Heart left ventricle (tissue), 16 donors: ENCODE measurements at regions of chr14 and their contacts with region 1.

Region 1: GRCh38 chr14:69611201-69612011 is at the start of gene SUSD6:
- DNase-seq: peak; percentile 93 to 95 (median 94)
- ATAC-seq: peak; percentile 80 to 92 (median 90)
- H3K4me3 ChIP-seq: peak within 1 kb of the TSS; percentile 76 to 96 (median 86)
- H3K27ac ChIP-seq: peak within 1 kb of the TSS; percentile 94 to 100 (median 98)
- H3K4me1 ChIP-seq: peaks cover 5 to 60% (median 51%) of the 10 kb centered on the region in 12 donors
- H3K27me3 ChIP-seq: no peaks in the 10 kb centered on the region
- CTCF ChIP-seq: no peak
- POLR2A ChIP-seq: peak in 1 of 2 donors; percentile 70
- total RNA-seq, gene SUSD6: 17.8 to 49.2 (median 24.8) TPM

Region 2: GRCh38 chr14:69637503-69638030 is 26.2 kb after region 1 on chr14:
- intact Hi-C with region 1: loop called in 1 of 10 experiments (anchors 2 kb)
- DNase-seq: peak in 4 of 5 donors; percentile 45 to 64 (median 54)
- ATAC-seq: peak; percentile 37 to 75 (median 55)
- H3K4me3 ChIP-seq: no peak overlapping the region
- H3K27ac ChIP-seq: peak overlapping the region in 11 of 12 donors; percentile 30 to 84 (median 80)
- H3K4me1 ChIP-seq: peaks cover 7 to 85% (median 70%) of the 10 kb centered on the region in 12 donors
- H3K27me3 ChIP-seq: no peaks in the 10 kb centered on the region
- CTCF ChIP-seq: no peak
- POLR2A ChIP-seq: no peak

Region 3: GRCh38 chr14:69652942-69653684 is 41.7 kb after region 1 on chr14:
- intact Hi-C with region 1: loop called in 4 of 10 experiments (anchors 5 kb)
- DNase-seq: peak in 1 of 5 donors; percentile 17
- ATAC-seq: peak; percentile 16 to 66 (median 42)
- H3K4me3 ChIP-seq: peak overlapping the region in 1 of 12 donors; percentile 18
- H3K27ac ChIP-seq: peak overlapping the region in 11 of 12 donors; percentile 50 to 92 (median 77)
- H3K4me1 ChIP-seq: peaks cover 13 to 97% (median 89%) of the 10 kb centered on the region in 12 donors
- H3K27me3 ChIP-seq: no peaks in the 10 kb centered on the region
- CTCF ChIP-seq: no peak
- POLR2A ChIP-seq: no peak

Region 4: GRCh38 chr14:69667938-69668335 is 56.5 kb after region 1 on chr14:
- intact Hi-C with region 1: loop called in 7 of 10 experiments (anchors 5 to 10 kb)
- DNase-seq: no peak
- ATAC-seq: no peak
- H3K4me3 ChIP-seq: no peak overlapping the region
- H3K27ac ChIP-seq: peak overlapping the region in 3 of 12 donors; percentile 11 to 66 (median 55)
- H3K4me1 ChIP-seq: peaks cover 48 to 100% (median 83%) of the 10 kb centered on the region in 12 donors
- H3K27me3 ChIP-seq: no peaks in the 10 kb centered on the region
- CTCF ChIP-seq: no peak
- POLR2A ChIP-seq: no peak

Region 5: GRCh38 chr14:69673578-69674305 is 62.3 kb after region 1 on chr14:
- intact Hi-C with region 1: loop called in 7 of 10 experiments (anchors 5 to 10 kb)
- DNase-seq: peak in 1 of 5 donors; percentile 31
- ATAC-seq: peak in 2 of 4 donors; percentile 21 to 32
- H3K4me3 ChIP-seq: peak overlapping the region in 5 of 12 donors; percentile 1 to 34 (median 19)
- H3K27ac ChIP-seq: peak overlapping the region; percentile 1 to 79 (median 56)
- H3K4me1 ChIP-seq: peaks cover 33 to 85% (median 72%) of the 10 kb centered on the region in 12 donors
- H3K27me3 ChIP-seq: no peaks in the 10 kb centered on the region
- CTCF ChIP-seq: no peak
- POLR2A ChIP-seq: no peak

Region 6: DNA sequence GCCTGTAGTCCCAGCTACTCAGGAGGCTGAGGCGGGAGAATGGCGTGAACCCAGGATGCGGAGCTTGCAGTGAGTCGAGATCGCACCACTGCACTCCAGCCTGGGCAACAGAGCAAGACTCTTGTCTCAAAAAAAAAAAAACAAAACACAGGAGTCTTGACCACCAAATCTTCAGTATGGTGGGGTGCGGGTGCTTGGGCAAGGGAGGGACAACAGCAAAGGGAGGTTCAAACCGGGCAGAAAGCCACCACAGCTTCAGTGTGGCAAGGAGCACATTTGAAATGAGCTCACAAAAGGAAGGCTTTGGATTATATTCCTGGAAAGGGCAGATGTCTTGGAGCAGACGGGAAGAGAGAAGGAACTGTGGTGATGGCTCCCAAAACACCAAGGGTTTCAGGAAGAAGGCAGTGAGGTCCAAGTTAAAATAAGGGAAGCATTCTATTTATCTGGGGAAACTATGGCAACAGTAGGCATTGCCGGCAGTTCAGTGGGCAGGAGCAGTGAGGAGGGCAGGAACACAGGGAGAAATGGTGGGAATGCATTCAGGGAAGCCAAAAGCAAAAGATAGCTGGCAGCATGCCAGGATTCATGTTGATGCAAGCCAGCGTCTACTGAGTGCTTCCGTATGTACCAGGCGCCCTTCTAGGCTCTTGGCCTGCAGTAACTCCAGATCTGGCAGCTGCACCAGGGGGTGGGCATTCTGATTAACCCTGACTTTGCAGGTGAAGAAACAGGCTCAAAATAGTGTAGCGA is 104.5 kb after region 1 on chr14:
- intact Hi-C with region 1: loop called in 6 of 10 experiments (anchors 2 to 5 kb)
- DNase-seq: peak in 4 of 5 donors; percentile 77 to 86 (median 80)
- ATAC-seq: peak; percentile 33 to 70 (median 61)
- H3K4me3 ChIP-seq: no peak overlapping the region
- H3K27ac ChIP-seq: peak overlapping the region in 9 of 12 donors; percentile 4 to 89 (median 52)
- H3K4me1 ChIP-seq: peaks cover 22 to 99% (median 67%) of the 10 kb centered on the region in 12 donors
- H3K27me3 ChIP-seq: no peaks in the 10 kb centered on the region
- CTCF ChIP-seq: no peak
- POLR2A ChIP-seq: no peak

Region 7: DNA sequence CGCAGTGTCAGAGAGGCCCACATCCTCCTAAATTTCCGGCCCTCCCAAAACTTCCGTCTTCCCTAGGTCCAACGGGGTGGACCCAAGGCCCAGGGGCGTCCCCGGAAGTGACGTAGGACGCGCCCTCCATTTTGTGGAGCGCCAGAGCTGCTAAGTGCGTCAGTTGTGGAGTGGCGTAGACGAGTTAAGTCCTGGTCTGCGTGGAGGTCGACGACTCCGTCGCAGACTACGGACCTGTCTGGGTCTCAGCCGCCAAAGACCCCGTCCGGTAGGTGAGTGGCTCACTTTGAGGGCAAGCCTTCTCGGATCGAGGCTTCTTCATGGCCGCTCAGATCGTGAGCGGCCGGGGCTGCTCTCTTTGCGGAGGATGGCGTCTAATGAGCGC is 155.6 kb after region 1 on chr14 and contains the start of gene SRSF5:
- intact Hi-C with region 1: loop called in 1 of 10 experiments (anchors 2 kb)
- DNase-seq: peak; percentile 97 to 98 (median 97)
- ATAC-seq: peak; percentile 95 to 99 (median 98)
- H3K4me3 ChIP-seq: peak within 1 kb of the TSS; percentile 85 to 99 (median 96)
- H3K27ac ChIP-seq: peak within 1 kb of the TSS; percentile 98 to 100 (median 100)
- H3K4me1 ChIP-seq: peaks cover 0 to 46% (median 37%) of the 10 kb centered on the region in 12 donors
- H3K27me3 ChIP-seq: no peaks in the 10 kb centered on the region
- CTCF ChIP-seq: no peak
- POLR2A ChIP-seq: peak; percentile 80 to 97
- total RNA-seq, gene SRSF5: 63.8 to 197 (median 176) TPM

Region 8: DNA sequence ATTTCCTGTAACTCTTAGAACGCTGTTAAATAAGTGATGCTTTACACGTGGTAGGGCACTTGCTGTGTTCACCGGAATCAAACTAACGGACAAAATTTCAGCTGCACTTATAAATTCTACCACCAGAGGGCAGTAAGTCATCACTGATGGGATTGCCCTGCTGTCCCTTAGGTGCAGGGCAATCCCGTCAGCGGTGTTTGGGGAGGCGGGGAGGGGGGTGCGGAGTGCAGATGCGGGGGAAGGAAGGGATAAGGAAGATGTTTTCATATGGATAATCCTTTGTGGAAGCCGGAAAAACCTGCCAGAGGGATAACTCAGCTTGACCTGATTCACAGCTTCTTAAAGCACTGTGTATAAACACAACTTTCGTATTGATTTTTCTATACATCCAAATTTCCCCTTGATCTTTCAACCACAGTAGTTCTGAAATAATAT is 207.4 kb after region 1 on chr14:
- intact Hi-C with region 1: no loop called
- DNase-seq: peak in 3 of 5 donors; percentile 22 to 45 (median 32)
- ATAC-seq: peak in 3 of 4 donors; percentile 64 to 76 (median 73)
- H3K4me3 ChIP-seq: no peak overlapping the region
- H3K27ac ChIP-seq: no peak overlapping the region
- H3K4me1 ChIP-seq: peaks cover 0 to 4% (median 0%) of the 10 kb centered on the region in 12 donors
- H3K27me3 ChIP-seq: peaks cover 0 to 33% (median 12%) of the 10 kb centered on the region in 9 donors
- CTCF ChIP-seq: peak; percentile 72 to 88 (median 83)
- POLR2A ChIP-seq: no peak